Pancreas (tissue), 10 donors: ENCODE measurements at regions of chr10 and their contacts with region 1.

Region 1: DNA sequence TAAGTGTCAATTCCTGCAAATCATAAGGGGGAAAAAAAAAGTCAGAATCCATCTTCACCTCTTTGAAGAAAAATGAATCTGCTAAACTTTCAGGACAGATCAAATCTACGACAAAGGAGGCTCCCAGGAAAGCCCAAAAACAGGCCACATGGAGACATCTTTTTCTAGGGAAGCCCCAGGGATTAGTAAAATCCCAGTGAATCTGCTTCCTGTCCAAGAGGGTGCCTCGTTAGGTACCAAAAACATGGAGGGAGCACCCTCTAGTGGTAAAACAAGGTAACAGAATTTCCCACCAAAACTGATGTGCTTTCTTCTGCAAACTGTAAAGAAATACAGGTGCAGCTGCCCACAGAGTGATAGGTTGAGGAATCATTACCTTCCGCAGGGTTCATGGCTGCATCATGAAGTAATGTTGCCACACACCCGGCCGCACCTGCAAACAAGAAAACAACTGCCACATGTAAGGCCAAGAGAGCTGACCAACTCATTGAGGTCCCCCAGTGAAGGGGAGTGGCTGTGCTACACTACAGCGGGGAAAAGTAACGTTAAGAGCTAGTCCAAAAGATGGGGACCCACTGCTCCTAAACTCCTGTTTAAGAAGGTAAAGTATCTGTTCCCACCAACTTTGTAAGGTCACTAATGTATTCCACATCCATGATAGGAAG is 7.9 kb downstream of the SLC25A28 start:
- DNase-seq: peak in 2 of 6 donors; percentile 11 to 34
- ATAC-seq: peak; percentile 69 to 91 (median 82)
- H3K4me3 ChIP-seq: no peak overlapping the region
- H3K27ac ChIP-seq: no peak overlapping the region
- H3K4me1 ChIP-seq: peaks cover 0 to 8% (median under 1%) of the 10 kb centered on the region in 3 donors
- H3K27me3 ChIP-seq: no peaks in the 10 kb centered on the region
- CTCF ChIP-seq: peak; percentile 64 to 81 (median 79)

Region 2: GRCh38 chr10:98980353-98980752 is 631.9 kb before region 1 on chr10:
- intact Hi-C with region 1: no loop called
- DNase-seq: no peak
- ATAC-seq: no peak
- H3K4me3 ChIP-seq: no peak overlapping the region
- H3K27ac ChIP-seq: no peak overlapping the region
- H3K4me1 ChIP-seq: peaks cover 0 to 3% (median 0%) of the 10 kb centered on the region in 3 donors
- H3K27me3 ChIP-seq: no peaks in the 10 kb centered on the region
- CTCF ChIP-seq: no peak

Region 3: GRCh38 chr10:99370993-99371392 is 241.3 kb before region 1 on chr10:
- intact Hi-C with region 1: no loop called
- DNase-seq: no peak
- ATAC-seq: peak in 3 of 4 donors; percentile 66 to 74 (median 70)
- H3K4me3 ChIP-seq: no peak overlapping the region
- H3K27ac ChIP-seq: no peak overlapping the region
- H3K4me1 ChIP-seq: no peaks in the 10 kb centered on the region
- H3K27me3 ChIP-seq: no peaks in the 10 kb centered on the region
- CTCF ChIP-seq: peak in 2 of 4 donors; percentile 24 to 37

Region 4: GRCh38 chr10:99395750-99396445 is 216.4 kb before region 1 on chr10:
- intact Hi-C with region 1: loop called in 2 of 3 experiments (anchors 5 to 10 kb)
- DNase-seq: no peak
- ATAC-seq: peak in 1 of 4 donors; percentile 33
- H3K4me3 ChIP-seq: no peak overlapping the region
- H3K27ac ChIP-seq: no peak overlapping the region
- H3K4me1 ChIP-seq: no peaks in the 10 kb centered on the region
- H3K27me3 ChIP-seq: no peaks in the 10 kb centered on the region
- CTCF ChIP-seq: no peak

Region 5: DNA sequence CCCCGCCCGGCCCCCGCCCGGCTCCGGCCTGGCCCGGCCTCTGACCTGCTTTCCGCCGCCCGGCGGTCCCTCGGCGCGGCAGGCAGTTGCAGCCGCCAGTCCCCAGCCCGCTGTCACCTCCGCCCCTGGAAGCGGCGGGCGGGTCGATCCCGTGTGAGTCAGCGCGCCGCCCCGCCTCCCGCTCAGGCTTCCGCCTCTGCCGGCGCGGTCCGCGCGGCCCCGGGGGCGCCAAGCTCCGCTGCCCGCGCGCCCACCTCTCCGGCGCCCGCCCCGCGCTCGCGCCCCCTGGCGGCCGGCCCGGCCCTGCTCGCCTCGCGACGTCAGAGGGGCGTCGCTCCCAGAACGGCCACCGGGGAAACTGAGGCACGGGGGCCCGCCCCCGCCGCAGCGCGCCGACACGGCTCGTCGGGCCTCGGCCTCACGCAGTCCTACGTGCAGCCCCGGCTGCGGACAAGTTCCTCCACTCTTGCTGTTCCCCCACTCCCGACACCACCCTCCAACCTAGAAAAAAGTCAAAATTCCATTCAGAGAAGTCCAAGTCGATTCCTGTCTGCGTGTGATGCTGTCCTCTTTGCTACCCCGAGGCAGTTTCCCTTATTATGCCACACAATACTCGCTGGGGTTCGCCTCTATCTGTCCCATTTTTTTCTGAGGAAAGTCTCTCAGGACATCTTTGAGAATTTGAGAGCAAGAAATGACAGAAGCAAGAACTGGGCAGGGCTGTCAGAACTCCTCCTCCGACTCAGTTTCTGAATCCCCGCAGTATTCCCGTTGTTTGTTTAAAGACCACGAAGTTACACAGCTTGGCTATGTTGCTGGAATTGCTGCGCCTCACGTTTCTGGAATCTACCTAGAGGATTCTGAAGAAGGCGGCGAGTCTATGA is 397.7 kb after region 1 on chr10 and contains the start of gene DNMBP:
- intact Hi-C with region 1: no loop called
- DNase-seq: peak; percentile 78 to 92 (median 85)
- ATAC-seq: peak; percentile 90 to 97 (median 94)
- H3K4me3 ChIP-seq: peak within 1 kb of the TSS; percentile 49 to 71 (median 60)
- H3K27ac ChIP-seq: peak within 1 kb of the TSS in 3 of 4 donors; percentile 39 to 59 (median 58)
- H3K4me1 ChIP-seq: peaks cover 6 to 16% (median 7%) of the 10 kb centered on the region in 3 donors
- H3K27me3 ChIP-seq: no peaks in the 10 kb centered on the region
- CTCF ChIP-seq: peak; percentile 16 to 37 (median 32)
- total RNA-seq, gene DNMBP: 9.1 to 17.9 (median 12.5) TPM